ENCODE measurements at regions of chr3 and their contacts with region 1.

Region 1: DNA sequence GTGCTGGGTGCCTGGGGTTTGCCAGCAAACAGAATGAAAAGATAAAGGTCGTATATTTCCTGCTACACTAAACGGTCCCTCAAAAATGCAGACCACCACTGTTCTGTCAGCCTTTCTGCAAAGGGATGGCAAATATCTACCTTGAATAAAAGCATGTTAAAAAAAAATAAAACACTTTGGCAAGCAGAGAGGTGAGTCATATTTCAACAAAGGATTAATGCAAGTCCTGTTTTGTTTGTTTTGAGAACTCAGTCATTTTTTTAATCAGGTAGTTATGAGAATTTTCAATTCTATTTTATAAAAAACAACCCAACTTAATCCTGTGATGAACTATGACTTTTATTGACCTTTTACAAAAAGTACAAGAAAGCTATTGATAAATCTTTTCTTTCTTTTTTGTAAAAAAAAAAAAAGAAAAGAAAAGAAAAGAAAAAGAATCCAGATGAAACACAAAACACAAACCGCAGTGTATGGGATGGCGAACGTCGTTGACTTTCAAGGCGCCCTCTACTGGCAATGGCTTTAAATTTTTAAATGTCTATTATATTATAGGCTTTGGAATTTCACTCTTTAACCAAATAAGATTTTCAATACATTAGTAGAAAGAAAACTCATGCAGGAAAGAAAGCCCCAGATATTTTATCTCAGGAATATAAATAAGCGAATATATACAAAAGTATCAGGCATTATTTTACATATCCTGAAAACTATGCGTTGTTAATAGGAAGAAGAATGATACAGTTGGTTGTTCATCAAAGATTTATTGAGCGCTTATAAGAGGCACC is 87.8 kb downstream of the NCEH1 start:
- DNase-seq: no peak
- ATAC-seq: peak; percentile 72
- H3K4me3 ChIP-seq: peak overlapping the region; percentile 42 to 69
- H3K27ac ChIP-seq: peak overlapping the region; percentile 93
- H3K4me1 ChIP-seq: peaks cover 10% of the 10 kb centered on the region; the same call in 1 of the 2 replicates
- H3K27me3 ChIP-seq: no peaks in the 10 kb centered on the region
- CTCF ChIP-seq: peak; percentile 81; the same call in 1 of the 2 replicates

Region 2: GRCh38 chr3:172568701-172569100 is 54.4 kb before region 1 on chr3:
- CTCF ChIA-PET with region 1: no interaction called
- POLR2A ChIA-PET with region 1: interaction called, 14 read pairs
- in situ Hi-C with region 1: no loop called
- intact Hi-C with region 1: no loop called
- DNase-seq: no peak
- ATAC-seq: no peak
- H3K4me3 ChIP-seq: no peak overlapping the region
- H3K27ac ChIP-seq: no peak overlapping the region
- H3K4me1 ChIP-seq: peaks cover 4% of the 10 kb centered on the region
- H3K27me3 ChIP-seq: no peaks in the 10 kb centered on the region
- CTCF ChIP-seq: no peak

Region 3: GRCh38 chr3:172658344-172659245 is 35.5 kb after region 1 on chr3:
- CTCF ChIA-PET with region 1: interaction called, 19 read pairs
- POLR2A ChIA-PET with region 1: interaction called, 4 read pairs
- in situ Hi-C with region 1: no loop called
- intact Hi-C with region 1: no loop called
- DNase-seq: peak; percentile 99
- ATAC-seq: peak; percentile 95
- H3K4me3 ChIP-seq: peak overlapping the region in 1 of 2 experiments; percentile 3; a peak in 1 of 4 replicates
- H3K27ac ChIP-seq: peak overlapping the region; percentile 87
- H3K4me1 ChIP-seq: peaks cover 19% of the 10 kb centered on the region
- H3K27me3 ChIP-seq: no peaks in the 10 kb centered on the region
- CTCF ChIP-seq: no peak

Region 4: GRCh38 chr3:172904711-172905373 is 281.7 kb after region 1 on chr3:
- CTCF ChIA-PET with region 1: no interaction called
- POLR2A ChIA-PET with region 1: interaction called, 10 read pairs
- in situ Hi-C with region 1: no loop called
- intact Hi-C with region 1: no loop called
- DNase-seq: no peak
- ATAC-seq: peak; percentile 30; the same call in 1 of the 2 replicates
- H3K4me3 ChIP-seq: no peak overlapping the region
- H3K27ac ChIP-seq: no peak overlapping the region
- H3K4me1 ChIP-seq: no peaks in the 10 kb centered on the region
- H3K27me3 ChIP-seq: peaks cover 7% of the 10 kb centered on the region; the same call in 1 of the 2 replicates
- CTCF ChIP-seq: no peak

Measured in Panc1 (cell line).